A549 (cell line): ENCODE measurements at regions of chr17 and their contacts with region 1.

Region 1: DNA sequence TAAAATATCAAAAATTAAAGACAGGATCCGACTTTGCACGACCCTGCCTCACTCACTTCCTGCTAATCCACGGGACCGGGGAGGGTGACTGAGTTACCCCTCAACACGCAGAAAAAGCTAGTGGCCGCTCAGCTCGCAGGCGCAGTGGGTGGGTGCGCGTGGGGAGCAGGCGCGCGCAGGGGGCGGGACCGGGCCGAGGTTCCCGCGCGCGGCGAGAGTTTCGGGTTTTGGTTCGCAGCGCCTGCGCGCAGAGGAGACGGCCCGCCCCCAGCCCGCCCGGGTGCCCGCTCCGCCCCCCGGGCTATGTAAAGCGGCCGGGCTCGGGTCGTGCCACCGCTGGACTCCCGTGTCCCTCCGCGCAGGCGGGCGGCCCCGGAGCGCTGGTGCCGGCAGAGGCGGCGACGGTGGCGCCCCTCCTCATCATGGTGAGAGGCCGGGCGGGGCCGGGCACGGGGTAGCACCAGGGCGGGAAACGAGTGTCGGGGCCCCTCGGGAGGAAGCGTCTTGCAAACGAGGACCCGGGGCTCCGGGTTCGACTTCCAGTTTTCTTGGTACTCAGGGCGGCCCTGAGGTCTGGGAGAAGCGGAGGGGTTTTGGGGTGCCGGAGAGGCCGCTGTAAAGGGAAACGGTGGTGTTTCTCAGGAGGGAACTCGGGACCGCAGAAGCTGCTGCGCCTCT is at the start of gene CNP:
- DNase-seq: peak; percentile 92 to 95
- ATAC-seq: peak; percentile 69 to 85
- H3K4me3 ChIP-seq: peak within 1 kb of the TSS; percentile 79
- H3K27ac ChIP-seq: peak within 1 kb of the TSS; percentile 75 to 96
- H3K4me1 ChIP-seq: peaks cover 12% of the 10 kb centered on the region; the same call in 2 of the 3 replicates
- CTCF ChIP-seq: no peak
- EP300 ChIP-seq: no peak
- POLR2A ChIP-seq: peak; percentile 84
- RAD21 ChIP-seq: no peak
- polyA plus RNA-seq, gene CNP: 38.6 and 49.8 TPM in 2 replicates

Region 2: GRCh38 chr17:41559548-41559947 is 407.1 kb before region 1 on chr17:
- CTCF ChIA-PET with region 1: no interaction called
- POLR2A ChIA-PET with region 1: no interaction called
- DNase-seq: no peak
- ATAC-seq: no peak
- H3K4me3 ChIP-seq: no peak overlapping the region
- H3K27ac ChIP-seq: no peak overlapping the region
- H3K4me1 ChIP-seq: peaks cover 7% of the 10 kb centered on the region
- CTCF ChIP-seq: no peak
- EP300 ChIP-seq: no peak
- POLR2A ChIP-seq: no peak
- RAD21 ChIP-seq: no peak

Region 3: GRCh38 chr17:41667280-41668041 is 299.1 kb before region 1 on chr17:
- CTCF ChIA-PET with region 1: no interaction called
- POLR2A ChIA-PET with region 1: no interaction called
- DNase-seq: no peak
- ATAC-seq: peak in 1 of 2 experiments; percentile 1; a peak in 3 of 6 replicates
- H3K4me3 ChIP-seq: no peak overlapping the region
- H3K27ac ChIP-seq: peak overlapping the region; percentile 86 to 92
- H3K4me1 ChIP-seq: peaks cover 23% of the 10 kb centered on the region
- CTCF ChIP-seq: no peak; the same call in 2 of the 3 replicates
- EP300 ChIP-seq: no peak
- POLR2A ChIP-seq: no peak
- RAD21 ChIP-seq: no peak

Region 4: GRCh38 chr17:41918314-41919164 is 48.1 kb before region 1 on chr17 and contains the start of gene ACLY:
- CTCF ChIA-PET with region 1: interaction called, 111 read pairs
- POLR2A ChIA-PET with region 1: interaction called, 3 read pairs
- DNase-seq: peak; percentile 98
- ATAC-seq: peak; percentile 39 to 93
- H3K4me3 ChIP-seq: peak within 1 kb of the TSS; percentile 94
- H3K27ac ChIP-seq: peak within 1 kb of the TSS; percentile 93 to 95
- H3K4me1 ChIP-seq: peaks cover 52% of the 10 kb centered on the region
- CTCF ChIP-seq: no peak
- EP300 ChIP-seq: no peak
- POLR2A ChIP-seq: peak; percentile 97
- RAD21 ChIP-seq: 0 out of 5 replicates have a peak, but pooled peaks of 1 of the 2 experiments have one; percentile 33
- polyA plus RNA-seq, gene ACLY: 367 and 376 TPM in 2 replicates

Region 5: GRCh38 chr17:41937970-41938954 is 28.3 kb before region 1 on chr17:
- CTCF ChIA-PET with region 1: interaction called, 204 read pairs
- POLR2A ChIA-PET with region 1: no interaction called
- DNase-seq: no peak
- ATAC-seq: no peak
- H3K4me3 ChIP-seq: no peak overlapping the region
- H3K27ac ChIP-seq: no peak overlapping the region
- H3K4me1 ChIP-seq: no peaks in the 10 kb centered on the region
- CTCF ChIP-seq: no peak
- EP300 ChIP-seq: no peak
- POLR2A ChIP-seq: no peak
- RAD21 ChIP-seq: no peak

Region 6: DNA sequence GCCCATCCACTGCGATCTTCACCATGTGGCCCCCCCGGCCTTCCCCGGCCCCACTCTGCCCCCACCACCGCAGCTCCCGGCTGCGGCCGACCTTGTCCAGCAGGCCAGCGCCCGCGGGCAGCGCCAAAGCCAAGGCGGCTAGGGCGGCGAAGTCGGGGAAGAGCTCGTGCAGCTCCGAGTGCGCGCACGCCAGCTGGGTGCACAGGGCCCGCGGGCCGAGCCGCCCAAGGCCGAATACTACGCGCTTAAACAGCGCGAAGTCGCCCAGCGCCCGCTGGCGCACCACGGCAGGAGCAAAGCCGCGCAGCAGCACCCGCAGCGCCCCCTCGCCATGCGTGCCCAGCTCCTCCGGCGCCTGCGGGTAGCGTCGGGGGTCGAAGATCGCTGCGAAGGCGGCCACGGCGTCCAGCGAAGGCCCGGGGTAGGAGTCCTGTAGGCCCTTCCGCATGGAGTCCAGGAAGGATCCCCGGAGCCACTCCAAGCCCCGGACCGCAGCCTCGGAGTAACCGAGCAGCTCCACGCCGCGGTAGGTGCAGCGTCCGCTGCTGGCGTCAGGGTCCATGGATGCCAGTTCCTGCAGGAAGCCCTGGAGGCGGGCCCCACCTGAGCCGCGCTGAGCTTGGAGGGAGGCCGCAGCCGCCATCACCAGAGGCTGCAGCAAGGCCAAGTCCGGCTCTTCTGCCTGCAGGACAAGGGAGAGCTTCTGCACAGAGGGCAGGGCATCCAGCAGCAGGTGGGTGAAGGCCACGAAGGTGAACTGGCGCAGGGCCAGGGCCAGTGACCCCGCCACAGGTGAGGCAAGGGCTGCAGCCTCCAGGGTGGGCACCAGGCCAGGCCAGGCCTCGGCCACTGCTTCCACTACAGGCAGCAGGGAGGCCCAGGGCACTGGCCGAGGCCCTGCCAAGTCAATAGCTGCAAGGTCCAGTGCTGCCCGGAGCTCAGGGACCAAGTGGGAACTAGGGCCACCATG is 73.5 kb after region 1 on chr17:
- CTCF ChIA-PET with region 1: interaction called, 18 read pairs
- POLR2A ChIA-PET with region 1: no interaction called
- DNase-seq: no peak
- ATAC-seq: peak in 1 of 2 experiments; percentile 12; a peak in 2 of 6 replicates
- H3K4me3 ChIP-seq: no peak overlapping the region
- H3K27ac ChIP-seq: no peak overlapping the region
- H3K4me1 ChIP-seq: no peaks in the 10 kb centered on the region
- CTCF ChIP-seq: no peak
- EP300 ChIP-seq: no peak
- POLR2A ChIP-seq: no peak
- RAD21 ChIP-seq: no peak

Region 7: GRCh38 chr17:42101513-42102319 is 135.1 kb after region 1 on chr17:
- CTCF ChIA-PET with region 1: interaction called, 21 read pairs
- POLR2A ChIA-PET with region 1: no interaction called
- DNase-seq: peak; percentile 76 to 93
- ATAC-seq: peak; percentile 61 to 89; a peak in 5 of 6 replicates
- H3K4me3 ChIP-seq: no peak overlapping the region
- H3K27ac ChIP-seq: no peak overlapping the region
- H3K4me1 ChIP-seq: no peaks in the 10 kb centered on the region
- CTCF ChIP-seq: peak; percentile 75
- EP300 ChIP-seq: no peak
- POLR2A ChIP-seq: no peak
- RAD21 ChIP-seq: peak; percentile 73 to 88